Activated CD8-positive, alpha-beta memory T cell treated with anti-CD3 and anti-CD28 coated beads, Interleukin-2, amount 10 ng/mL, durations not matched to agents 7 days and 5 days (primary cell): ENCODE measurements at regions of chr14 and their contacts with region 1.

Region 1: DNA sequence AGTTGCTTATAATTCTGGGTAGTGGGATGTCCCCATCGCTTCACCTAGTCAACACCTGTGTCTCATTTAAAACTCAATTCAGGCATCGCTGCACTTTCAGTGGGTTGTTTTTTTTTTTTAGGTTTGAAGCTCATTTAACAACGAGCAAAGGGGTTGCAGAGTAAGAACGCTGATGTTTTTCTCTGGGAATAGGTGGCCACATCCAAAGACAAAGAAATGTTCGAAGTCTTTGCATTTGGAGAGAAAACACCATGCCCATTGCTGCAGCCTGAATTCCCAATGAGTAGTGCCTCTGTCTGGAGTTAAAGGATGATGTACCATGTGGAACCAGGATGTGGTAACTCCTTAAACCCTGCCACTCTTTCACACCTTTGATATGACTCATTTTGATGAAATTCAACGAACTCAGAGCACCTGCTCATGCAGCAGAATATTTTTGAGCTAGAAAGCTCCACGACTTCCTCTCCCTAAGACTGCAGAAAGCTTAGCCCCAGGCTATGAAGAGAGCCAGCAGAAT is 35.1 kb upstream of the BATF start:
- DNase-seq: peak; percentile 61
- ATAC-seq: peak; percentile 84
- H3K4me3 Mint-ChIP-seq: no peak overlapping the region
- H3K27ac Mint-ChIP-seq: peak overlapping the region; percentile 73
- H3K4me1 Mint-ChIP-seq: peaks cover 42% of the 10 kb centered on the region
- H3K27me3 Mint-ChIP-seq: no peaks in the 10 kb centered on the region

Region 2: DNA sequence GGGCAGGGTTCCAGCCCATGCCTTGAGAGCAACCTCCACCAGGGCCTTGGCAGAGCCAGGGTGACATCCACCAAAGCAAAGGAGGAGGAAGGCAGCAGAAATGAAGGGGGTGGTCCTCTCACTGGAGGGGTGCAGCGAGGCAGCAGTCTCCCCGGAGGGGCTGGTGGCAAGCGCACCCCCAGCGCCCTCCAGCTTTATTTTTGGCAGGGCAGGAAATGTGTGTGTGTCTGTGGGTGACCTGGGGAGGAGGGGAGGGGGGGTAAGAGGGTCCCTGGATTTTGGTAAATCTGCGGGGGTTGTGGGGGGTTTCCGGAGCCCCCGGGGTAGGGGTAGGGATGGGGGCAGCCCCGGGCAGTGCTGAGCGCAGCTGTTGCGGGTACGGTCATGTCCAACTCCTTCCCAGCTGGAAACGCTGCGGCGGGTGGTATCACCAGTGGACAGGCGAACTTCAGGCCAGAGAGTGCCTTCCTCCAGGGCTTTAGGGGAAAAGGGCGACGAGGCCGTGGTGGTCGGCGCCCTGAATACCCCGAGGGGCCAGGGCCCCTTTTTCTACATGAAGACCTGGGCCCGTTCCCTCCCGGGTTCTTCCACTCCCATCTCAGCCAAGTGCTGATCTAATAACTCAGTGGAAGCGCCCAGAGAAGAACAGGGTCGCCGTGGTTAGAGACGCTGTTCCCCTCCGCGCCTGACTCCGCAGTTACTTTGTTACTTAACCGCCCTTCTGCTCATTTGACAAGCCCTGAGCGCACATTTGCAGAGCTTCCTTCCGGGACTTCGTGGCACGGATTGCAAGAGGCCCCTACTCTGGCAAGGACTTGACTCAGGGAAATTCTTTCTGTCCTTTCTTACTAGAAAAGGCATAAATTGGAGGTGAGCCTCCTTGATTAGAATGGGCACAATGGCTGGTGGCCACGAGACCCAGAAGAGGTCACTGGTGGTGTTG is 153.3 kb before region 1 on chr14:
- CTCF ChIA-PET with region 1: interaction called, 13 read pairs
- DNase-seq: peak; percentile 83
- ATAC-seq: peak; percentile 90
- H3K4me3 Mint-ChIP-seq: peak overlapping the region; percentile 67
- H3K27ac Mint-ChIP-seq: peak overlapping the region; percentile 94
- H3K4me1 Mint-ChIP-seq: peaks cover 31% of the 10 kb centered on the region
- H3K27me3 Mint-ChIP-seq: peaks cover 14% of the 10 kb centered on the region

Region 3: DNA sequence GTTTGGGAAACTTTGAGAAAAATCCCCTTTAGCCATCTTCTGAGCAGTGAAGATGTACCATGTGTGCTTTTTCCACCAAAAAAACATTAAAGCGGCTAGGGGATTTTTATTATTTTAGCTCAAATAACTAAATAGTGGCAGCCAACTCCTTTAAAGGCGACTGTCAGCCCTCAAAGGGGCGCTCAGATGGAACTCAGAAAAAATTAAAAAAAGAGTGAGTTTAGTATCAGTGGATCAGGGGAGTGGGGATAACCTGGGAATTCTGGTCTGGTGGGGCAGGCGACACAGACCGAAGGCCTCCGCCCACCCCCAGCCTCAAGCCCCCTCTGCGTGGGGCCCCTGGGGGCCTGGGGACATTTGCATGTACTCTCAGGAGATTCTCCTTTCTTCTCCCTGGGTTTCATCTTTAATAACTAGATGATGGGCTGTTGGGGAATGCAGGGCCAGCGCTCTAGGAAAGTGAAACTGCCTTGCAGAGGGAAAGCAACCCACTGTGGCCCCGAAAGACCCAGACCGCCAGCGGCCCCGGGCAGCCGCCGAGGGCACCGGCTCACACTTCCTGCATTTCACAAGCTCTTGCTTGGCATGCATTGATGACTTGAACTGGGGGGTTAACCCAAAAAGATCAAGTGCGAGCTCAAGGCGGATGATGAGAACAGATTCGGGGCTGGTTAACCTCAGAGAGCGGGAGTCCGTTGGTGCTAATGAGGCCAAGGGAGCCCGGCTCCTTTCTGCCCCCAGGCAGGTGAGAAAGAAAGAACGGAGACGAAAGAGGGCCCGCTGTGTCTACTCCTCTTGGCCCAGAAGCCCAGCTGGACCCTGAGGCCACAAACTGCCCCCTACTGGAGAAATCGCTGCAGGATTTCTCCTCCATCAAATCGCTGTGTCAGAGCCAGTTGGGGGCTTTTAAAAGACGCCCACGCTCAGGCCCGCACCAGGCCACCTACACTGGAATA is 27.7 kb after region 1 on chr14:
- CTCF ChIA-PET with region 1: interaction called, 49 read pairs
- DNase-seq: peak; percentile 81
- ATAC-seq: peak; percentile 76
- H3K4me3 Mint-ChIP-seq: peak overlapping the region; percentile 79
- H3K27ac Mint-ChIP-seq: peak overlapping the region; percentile 99
- H3K4me1 Mint-ChIP-seq: peaks cover 52% of the 10 kb centered on the region
- H3K27me3 Mint-ChIP-seq: no peaks in the 10 kb centered on the region

Region 4: DNA sequence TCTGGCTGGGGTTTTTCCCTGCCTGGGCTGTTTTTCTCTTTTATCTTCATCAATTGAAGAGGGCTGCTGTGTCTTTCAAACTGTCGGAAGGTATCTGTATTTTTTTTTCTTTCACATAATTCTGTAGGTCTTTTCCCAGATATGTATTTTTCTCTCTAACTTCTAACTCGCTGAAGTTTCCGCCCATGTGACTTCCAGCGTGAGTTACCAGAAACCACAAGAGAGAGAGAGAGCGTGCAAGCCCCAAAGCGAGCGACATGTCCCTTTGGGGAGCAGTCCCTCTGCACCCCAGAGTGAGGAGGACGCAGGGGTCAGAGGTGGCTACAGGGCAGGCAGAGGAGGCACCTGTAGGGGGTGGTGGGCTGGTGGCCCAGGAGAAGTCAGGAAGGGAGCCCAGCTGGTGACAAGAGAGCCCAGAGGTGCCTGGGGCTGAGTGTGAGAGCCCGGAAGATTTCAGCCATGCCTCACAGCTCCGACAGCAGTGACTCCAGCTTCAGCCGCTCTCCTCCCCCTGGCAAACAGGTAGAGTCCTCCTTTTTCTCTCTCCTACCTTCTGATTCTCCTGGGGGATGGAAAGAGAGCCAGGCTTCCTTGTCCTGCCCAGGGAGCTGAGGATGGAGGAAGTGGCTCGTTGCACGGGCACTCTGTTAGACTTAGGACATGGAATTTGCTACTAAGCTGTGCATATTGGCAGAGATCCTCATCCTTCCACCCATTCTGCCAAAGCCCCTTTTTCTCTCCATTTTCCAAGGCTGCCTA is 35.2 kb after region 1 on chr14 and contains the start of gene BATF:
- CTCF ChIA-PET with region 1: interaction called, 49 read pairs
- DNase-seq: peak; percentile 92
- ATAC-seq: peak; percentile 71
- H3K4me3 Mint-ChIP-seq: peak within 1 kb of the TSS; percentile 99
- H3K27ac Mint-ChIP-seq: peak within 1 kb of the TSS; percentile 97
- H3K4me1 Mint-ChIP-seq: peaks cover 73% of the 10 kb centered on the region
- H3K27me3 Mint-ChIP-seq: no peaks in the 10 kb centered on the region
- total RNA-seq, gene BATF: 74.6 to 81.3 TPM

Region 5: DNA sequence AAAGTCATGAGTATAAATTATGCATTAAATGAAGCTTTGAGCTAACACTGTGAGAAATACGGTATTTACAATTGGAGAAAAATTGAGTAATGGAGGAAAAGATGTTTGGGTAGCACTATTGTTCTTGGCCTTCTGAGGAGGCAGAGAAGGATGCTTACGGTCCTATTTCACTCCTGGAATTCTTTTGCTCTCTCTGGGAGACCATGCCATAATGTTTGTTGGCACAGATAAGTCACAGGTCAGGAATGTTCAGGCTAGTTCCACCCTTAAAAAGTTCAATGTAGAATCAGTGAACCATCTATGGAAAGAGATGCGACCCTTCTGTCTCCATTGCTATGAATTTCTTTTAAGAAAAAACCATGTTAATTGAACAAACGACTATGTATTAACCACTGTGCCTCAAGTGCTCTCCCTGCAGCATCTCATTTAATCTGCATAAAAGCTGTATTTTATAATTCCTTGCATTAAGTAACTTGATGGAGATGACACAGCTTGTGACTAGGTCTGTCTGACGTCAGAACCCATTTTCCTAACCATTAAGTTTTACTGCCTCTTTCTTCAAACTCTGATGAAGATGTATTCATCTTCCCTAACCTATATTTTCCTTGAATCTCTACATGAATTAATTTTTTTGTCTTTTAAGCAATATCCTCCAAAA is 44.6 kb after region 1 on chr14:
- CTCF ChIA-PET with region 1: interaction called, 11 read pairs
- DNase-seq: peak; percentile 7
- ATAC-seq: no peak
- H3K4me3 Mint-ChIP-seq: no peak overlapping the region
- H3K27ac Mint-ChIP-seq: peak overlapping the region; percentile 44
- H3K4me1 Mint-ChIP-seq: peaks cover 75% of the 10 kb centered on the region
- H3K27me3 Mint-ChIP-seq: no peaks in the 10 kb centered on the region

Region 6: DNA sequence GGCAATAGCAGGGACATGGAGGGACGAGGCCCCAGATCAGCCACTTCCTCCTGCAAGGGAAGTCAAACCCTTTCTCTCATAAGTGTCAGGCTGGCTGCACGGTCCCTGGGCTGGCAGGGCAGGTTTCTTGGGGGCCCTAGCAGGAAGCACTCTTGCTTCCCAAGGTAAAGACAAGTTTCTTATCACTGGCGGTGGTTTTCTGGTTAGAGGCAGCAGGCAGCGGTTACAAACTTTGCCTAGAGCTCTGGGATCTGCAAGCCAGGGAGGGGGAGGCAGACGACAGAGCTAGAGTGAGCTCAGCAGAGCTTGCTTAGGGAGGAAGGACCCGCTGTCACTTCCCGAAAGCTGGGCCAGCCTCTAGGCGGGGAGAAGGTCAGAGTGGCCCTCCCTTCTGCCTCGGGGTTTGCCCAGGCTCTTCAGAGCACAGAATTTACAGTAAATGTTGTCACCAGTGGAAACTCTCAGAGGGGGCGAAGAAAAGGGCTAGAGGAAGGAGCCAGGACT is 55.4 kb after region 1 on chr14:
- CTCF ChIA-PET with region 1: interaction called, 11 read pairs
- DNase-seq: peak; percentile 90
- ATAC-seq: peak; percentile 85
- H3K4me3 Mint-ChIP-seq: peak overlapping the region; percentile 68
- H3K27ac Mint-ChIP-seq: peak overlapping the region; percentile 99
- H3K4me1 Mint-ChIP-seq: peaks cover 74% of the 10 kb centered on the region
- H3K27me3 Mint-ChIP-seq: no peaks in the 10 kb centered on the region

Region 7: GRCh38 chr14:75566321-75566720 is 79.1 kb after region 1 on chr14:
- CTCF ChIA-PET with region 1: interaction called, 24 read pairs
- DNase-seq: peak; percentile 87
- ATAC-seq: peak; percentile 84
- H3K4me3 Mint-ChIP-seq: peak overlapping the region; percentile 4
- H3K27ac Mint-ChIP-seq: peak overlapping the region; percentile 80
- H3K4me1 Mint-ChIP-seq: peaks cover 66% of the 10 kb centered on the region
- H3K27me3 Mint-ChIP-seq: no peaks in the 10 kb centered on the region

Region 8: DNA sequence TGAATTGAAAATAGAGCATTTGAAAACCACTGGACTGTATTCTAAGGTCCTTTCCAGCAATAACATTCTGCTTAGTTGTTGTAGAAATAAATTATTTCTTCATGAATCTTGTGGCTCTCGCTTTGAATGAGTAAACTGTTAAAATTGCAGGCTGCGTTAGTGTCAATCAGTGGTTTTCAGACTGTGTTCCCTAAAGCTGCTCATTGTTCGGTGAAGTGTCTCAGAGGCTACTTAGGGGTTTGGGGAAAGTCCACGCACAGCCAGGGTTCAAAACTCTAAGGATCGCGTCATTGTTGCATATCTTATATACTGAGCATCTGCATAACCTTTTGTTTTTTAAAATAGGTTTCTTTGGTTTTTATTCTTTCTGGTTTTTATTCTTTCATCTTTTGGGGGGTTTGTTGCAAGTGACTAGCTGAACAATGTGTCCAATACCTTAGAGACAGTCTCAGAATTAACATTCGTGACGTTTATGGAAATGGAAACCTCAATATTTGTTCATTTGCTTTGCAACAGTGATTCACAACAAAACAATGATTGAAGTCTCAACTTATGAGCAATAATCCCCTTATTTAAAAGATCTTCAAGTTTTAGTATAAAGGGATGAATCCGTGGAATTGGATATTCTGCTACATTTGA is 282.0 kb after region 1 on chr14:
- CTCF ChIA-PET with region 1: no interaction called
- DNase-seq: no peak
- ATAC-seq: no peak
- H3K4me3 Mint-ChIP-seq: no peak overlapping the region
- H3K27ac Mint-ChIP-seq: no peak overlapping the region
- H3K4me1 Mint-ChIP-seq: no peaks in the 10 kb centered on the region
- H3K27me3 Mint-ChIP-seq: no peaks in the 10 kb centered on the region